Heart left ventricle (tissue), 16 donors: ENCODE measurements at regions of chr3 and their contacts with region 1.

Region 1: GRCh38 chr3:58167431-58168351 is 43.1 kb downstream of the DNASE1L3 start:
- DNase-seq: peak; percentile 71 to 83 (median 78)
- ATAC-seq: peak; percentile 75 to 82 (median 78)
- H3K4me3 ChIP-seq: no peak overlapping the region
- H3K27ac ChIP-seq: peak overlapping the region in 11 of 12 donors; percentile 61 to 93 (median 85)
- H3K4me1 ChIP-seq: peaks cover 0 to 55% (median 32%) of the 10 kb centered on the region in 12 donors
- H3K27me3 ChIP-seq: no peaks in the 10 kb centered on the region
- CTCF ChIP-seq: peak; percentile 79 to 94 (median 88)
- POLR2A ChIP-seq: no peak

Region 2: DNA sequence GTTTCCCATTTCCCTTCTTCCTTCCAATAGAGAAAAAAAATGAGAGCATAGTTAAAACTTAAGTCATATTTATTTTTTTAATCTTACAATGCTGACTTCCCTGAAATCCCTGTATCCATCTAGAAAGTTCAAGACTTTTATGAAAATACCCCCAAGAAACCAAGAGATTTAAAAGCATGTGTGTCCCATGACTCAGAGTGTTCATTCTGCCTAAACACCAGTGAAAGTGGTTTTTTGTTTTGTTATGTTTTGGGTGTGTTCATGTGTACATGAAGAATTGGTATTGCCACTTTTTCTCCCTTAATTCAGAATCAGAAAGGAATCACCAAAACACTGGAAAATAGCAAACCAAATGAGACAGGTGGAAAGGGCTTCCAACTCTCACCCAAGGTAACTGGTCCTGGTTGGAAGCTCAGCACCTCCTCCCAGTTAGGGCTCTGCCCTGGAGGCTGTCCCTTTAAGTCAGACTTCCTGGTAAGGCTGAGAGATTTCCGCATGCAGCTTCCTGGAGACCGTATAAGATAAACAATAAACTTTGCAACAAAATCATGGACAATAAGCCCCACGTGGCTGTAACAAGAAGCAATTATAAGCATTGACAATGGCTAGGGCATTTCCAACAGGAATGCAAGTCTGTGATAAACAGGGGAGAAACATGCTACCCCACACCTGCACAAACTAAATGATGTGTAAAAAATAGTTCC is 1244.0 kb before region 1 on chr3:
- intact Hi-C with region 1: no loop called
- DNase-seq: peak in 4 of 5 donors; percentile 49 to 71 (median 63)
- ATAC-seq: peak; percentile 67 to 88 (median 78)
- H3K4me3 ChIP-seq: no peak overlapping the region
- H3K27ac ChIP-seq: peak overlapping the region in 11 of 12 donors; percentile 13 to 79 (median 69)
- H3K4me1 ChIP-seq: peaks cover 2 to 81% (median 62%) of the 10 kb centered on the region in 12 donors
- H3K27me3 ChIP-seq: no peaks in the 10 kb centered on the region
- CTCF ChIP-seq: peak in 1 of 12 donors; percentile 6
- POLR2A ChIP-seq: no peak

Region 3: GRCh38 chr3:57889807-57890206 is 277.9 kb before region 1 on chr3:
- intact Hi-C with region 1: loop called in 1 of 10 experiments (anchors 10 kb)
- DNase-seq: peak in 1 of 5 donors; percentile 20
- ATAC-seq: peak; percentile 53 to 83 (median 66)
- H3K4me3 ChIP-seq: peak overlapping the region; percentile 8 to 66 (median 48)
- H3K27ac ChIP-seq: peak overlapping the region; percentile 18 to 91 (median 86)
- H3K4me1 ChIP-seq: peaks cover 0 to 6% (median 0%) of the 10 kb centered on the region in 12 donors
- H3K27me3 ChIP-seq: no peaks in the 10 kb centered on the region
- CTCF ChIP-seq: no peak
- POLR2A ChIP-seq: peak in 1 of 2 donors; percentile 33

Region 4: DNA sequence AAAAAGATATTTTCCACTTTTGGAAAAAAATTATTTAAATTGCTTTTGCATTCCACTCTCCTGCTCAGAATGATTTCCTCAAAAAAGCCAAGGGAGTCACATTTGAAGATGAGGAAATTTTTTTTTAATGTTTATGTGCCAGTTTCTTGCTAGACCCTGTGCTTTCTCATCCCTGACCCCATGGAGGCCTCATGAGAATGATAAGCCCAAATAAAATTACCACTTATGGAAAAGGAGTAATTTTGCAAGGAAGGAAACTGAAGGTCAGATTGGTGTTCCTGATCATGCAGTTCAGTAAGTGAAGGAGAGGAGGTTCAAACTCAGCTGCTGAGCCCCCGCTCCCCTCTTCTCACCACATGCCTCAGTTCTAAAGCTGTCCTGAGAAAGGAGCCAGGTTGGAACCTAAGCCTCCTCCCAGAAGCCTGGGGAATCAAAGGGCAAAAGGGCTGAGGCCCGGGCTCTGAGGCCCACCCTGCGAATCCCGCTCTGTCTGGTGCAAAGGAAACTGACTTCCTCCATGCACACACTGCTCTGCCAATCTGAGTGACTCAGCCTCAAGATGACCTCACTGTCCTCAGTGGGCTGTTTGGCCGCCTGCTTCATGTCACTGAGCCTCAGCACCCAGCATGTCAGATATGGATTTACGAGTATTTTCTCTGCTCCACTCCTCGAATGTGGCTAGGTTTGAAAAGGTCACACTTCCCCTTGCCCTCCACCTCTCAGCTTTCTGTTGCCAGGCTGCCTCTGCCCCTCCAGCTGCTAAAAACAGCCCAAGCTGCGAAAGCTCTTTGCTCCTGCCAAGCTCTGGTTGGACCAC is 216.4 kb before region 1 on chr3:
- intact Hi-C with region 1: loop called in 1 of 10 experiments (anchors 5 kb)
- DNase-seq: peak; percentile 74 to 91 (median 82)
- ATAC-seq: peak; percentile 92 to 95 (median 94)
- H3K4me3 ChIP-seq: peak overlapping the region in 1 of 12 donors; percentile 8
- H3K27ac ChIP-seq: peak overlapping the region; percentile 82 to 97 (median 92)
- H3K4me1 ChIP-seq: peaks cover 8 to 48% (median 32%) of the 10 kb centered on the region in 12 donors
- H3K27me3 ChIP-seq: no peaks in the 10 kb centered on the region
- CTCF ChIP-seq: no peak
- POLR2A ChIP-seq: peak in 1 of 2 donors; percentile 21

Region 5: DNA sequence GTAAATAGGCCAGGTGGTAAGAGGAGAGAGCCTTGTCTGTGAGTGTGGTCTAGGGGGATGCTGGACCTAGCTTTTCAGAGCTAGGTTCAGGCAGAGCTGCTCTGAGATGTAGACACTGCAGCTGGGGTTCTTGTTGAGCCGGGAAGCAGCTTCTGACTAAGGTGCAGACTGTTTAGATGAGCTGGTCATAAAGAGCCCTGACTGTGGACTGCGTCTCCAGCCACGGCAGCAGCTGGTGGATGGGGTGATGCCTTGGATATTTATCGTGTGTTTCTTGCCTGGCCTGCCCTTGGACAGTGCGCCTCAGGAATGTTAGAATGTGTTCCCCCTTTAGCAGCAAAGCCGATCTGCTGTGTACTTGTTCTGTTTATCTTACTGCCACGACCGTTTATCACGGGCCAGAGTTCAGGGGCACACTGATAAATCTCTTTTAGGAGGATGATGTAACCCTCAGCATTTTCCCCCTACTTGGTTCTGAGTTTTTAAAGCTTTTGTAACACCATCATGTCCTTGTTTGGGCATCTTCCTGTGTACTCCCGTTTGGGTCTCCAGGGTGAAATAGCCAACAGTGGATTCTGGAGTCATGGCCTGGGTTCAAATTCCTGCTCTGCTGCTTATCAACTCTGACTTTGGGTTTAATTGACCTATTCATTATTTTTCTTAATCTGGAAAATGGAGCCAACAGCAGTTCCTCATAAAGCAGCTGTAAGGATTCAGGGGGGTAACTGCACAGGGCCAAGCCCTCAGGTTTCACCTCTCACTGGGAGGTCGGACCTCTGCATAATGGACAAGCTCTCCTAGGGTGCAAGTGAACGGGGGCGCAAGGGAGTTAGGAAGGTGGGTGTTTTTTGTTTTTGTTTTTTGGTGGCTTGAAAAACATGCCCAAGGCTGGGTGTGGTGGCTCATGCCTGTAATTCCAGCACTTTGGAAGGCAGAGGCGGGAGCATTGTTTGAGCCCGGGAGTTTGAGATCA is 108.1 kb before region 1 on chr3:
- intact Hi-C with region 1: no loop called
- DNase-seq: peak in 2 of 5 donors; percentile 31 to 50
- ATAC-seq: peak; percentile 58 to 75 (median 66)
- H3K4me3 ChIP-seq: no peak overlapping the region
- H3K27ac ChIP-seq: peak overlapping the region in 9 of 12 donors; percentile 4 to 82 (median 53)
- H3K4me1 ChIP-seq: peaks cover 0 to 61% (median 36%) of the 10 kb centered on the region in 12 donors
- H3K27me3 ChIP-seq: no peaks in the 10 kb centered on the region
- CTCF ChIP-seq: no peak
- POLR2A ChIP-seq: no peak

Region 6: GRCh38 chr3:58116161-58116955 is 51.3 kb before region 1 on chr3:
- intact Hi-C with region 1: loop called in 1 of 10 experiments (anchors 5 kb)
- DNase-seq: no peak
- ATAC-seq: no peak
- H3K4me3 ChIP-seq: no peak overlapping the region
- H3K27ac ChIP-seq: peak overlapping the region in 4 of 12 donors; percentile 2 to 61 (median 41)
- H3K4me1 ChIP-seq: peaks cover 0 to 50% (median 29%) of the 10 kb centered on the region in 12 donors
- H3K27me3 ChIP-seq: no peaks in the 10 kb centered on the region
- CTCF ChIP-seq: no peak
- POLR2A ChIP-seq: no peak

Region 7: GRCh38 chr3:58355179-58355578 is 187.5 kb after region 1 on chr3:
- intact Hi-C with region 1: no loop called
- DNase-seq: no peak
- ATAC-seq: no peak
- H3K4me3 ChIP-seq: no peak overlapping the region
- H3K27ac ChIP-seq: no peak overlapping the region
- H3K4me1 ChIP-seq: peaks cover 0 to 51% (median 5%) of the 10 kb centered on the region in 12 donors
- H3K27me3 ChIP-seq: no peaks in the 10 kb centered on the region
- CTCF ChIP-seq: no peak
- POLR2A ChIP-seq: no peak